ENCODE measurements at regions of chr17 and their contacts with region 1.

Region 1: GRCh38 chr17:73192894-73193701 is at the start of gene COG1:
- DNase-seq: peak; percentile 100
- H3K4me3 ChIP-seq: peak within 1 kb of the TSS; percentile 73 to 76
- H3K27ac ChIP-seq: peak within 1 kb of the TSS; percentile 85 to 95
- H3K4me1 ChIP-seq: peaks cover 5 to 8% of the 10 kb centered on the region in 2 experiments; a peak in 2 of 4 replicates
- H3K27me3 ChIP-seq: no peaks in the 10 kb centered on the region
- CTCF ChIP-seq: no peak
- EP300 ChIP-seq: no peak
- RAD21 ChIP-seq: no peak
- polyA plus RNA-seq, gene COG1: 52.8 and 53.1 TPM in 2 replicates

Region 2: GRCh38 chr17:72715906-72716572 is 477.1 kb before region 1 on chr17:
- CTCF ChIA-PET with region 1: interaction called, 35 read pairs
- POLR2A ChIA-PET with region 1: no interaction called
- DNase-seq: no peak
- H3K4me3 ChIP-seq: no peak overlapping the region; a peak in 1 of 4 replicates
- H3K27ac ChIP-seq: peak overlapping the region in 1 of 2 experiments; percentile 94; a peak in 2 of 4 replicates
- H3K4me1 ChIP-seq: peaks cover 5 to 10% of the 10 kb centered on the region in 2 experiments; a peak in 3 of 4 replicates
- H3K27me3 ChIP-seq: no peaks in the 10 kb centered on the region
- CTCF ChIP-seq: no peak
- EP300 ChIP-seq: peak in 1 of 2 experiments; percentile 95; a peak in 2 of 4 replicates
- RAD21 ChIP-seq: no peak

Region 3: GRCh38 chr17:72985881-72986720 is 207.0 kb before region 1 on chr17:
- CTCF ChIA-PET with region 1: interaction called, 125 read pairs
- POLR2A ChIA-PET with region 1: interaction called, 6 read pairs
- DNase-seq: peak; percentile 85
- H3K4me3 ChIP-seq: no peak overlapping the region; a peak in 1 of 4 replicates
- H3K27ac ChIP-seq: no peak overlapping the region
- H3K4me1 ChIP-seq: peaks cover 5 to 12% of the 10 kb centered on the region in 2 experiments; a peak in 2 of 4 replicates
- H3K27me3 ChIP-seq: no peaks in the 10 kb centered on the region
- CTCF ChIP-seq: peak; percentile 97
- EP300 ChIP-seq: no peak
- RAD21 ChIP-seq: peak; percentile 96

Region 4: DNA sequence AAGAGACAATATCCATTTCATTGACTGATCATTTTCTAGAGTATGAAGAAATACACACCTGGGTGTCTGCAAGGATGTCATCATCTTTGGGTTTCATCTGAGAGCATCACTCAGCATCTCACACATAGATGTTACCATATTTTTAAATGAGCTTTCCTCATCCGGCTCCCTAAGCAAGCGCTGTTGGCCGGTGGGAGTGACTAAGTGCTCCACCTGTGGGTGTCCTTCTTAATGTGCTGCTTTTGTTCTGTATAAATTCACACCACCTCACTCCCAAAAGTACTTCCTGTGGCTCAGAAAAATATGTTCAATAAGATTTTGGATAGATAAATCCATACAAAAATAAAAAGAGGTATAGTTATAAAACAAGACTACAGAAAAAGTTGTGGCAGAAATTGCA is 20.8 kb before region 1 on chr17:
- CTCF ChIA-PET with region 1: interaction called, 64 read pairs
- POLR2A ChIA-PET with region 1: no interaction called
- DNase-seq: no peak
- H3K4me3 ChIP-seq: no peak overlapping the region
- H3K27ac ChIP-seq: no peak overlapping the region
- H3K4me1 ChIP-seq: no peaks in the 10 kb centered on the region; a peak in 1 of 4 replicates
- H3K27me3 ChIP-seq: no peaks in the 10 kb centered on the region
- CTCF ChIP-seq: no peak
- EP300 ChIP-seq: no peak
- RAD21 ChIP-seq: no peak

Region 5: GRCh38 chr17:73226556-73227172 is 33.6 kb after region 1 on chr17:
- CTCF ChIA-PET with region 1: interaction called, 10 read pairs
- POLR2A ChIA-PET with region 1: interaction called, 14 read pairs
- DNase-seq: no peak
- H3K4me3 ChIP-seq: peak overlapping the region in 1 of 2 experiments; percentile 7; a peak in 1 of 4 replicates
- H3K27ac ChIP-seq: peak overlapping the region; percentile 7 to 30; a peak in 3 of 4 replicates
- H3K4me1 ChIP-seq: peaks cover 25 to 35% of the 10 kb centered on the region in 2 experiments
- H3K27me3 ChIP-seq: no peaks in the 10 kb centered on the region
- CTCF ChIP-seq: no peak
- EP300 ChIP-seq: no peak
- RAD21 ChIP-seq: no peak